GM13976 (cell line): ENCODE measurements at regions of chr20 and their contacts with region 1.

Region 1: GRCh38 chr20:21529863-21530262 is 16.0 kb upstream of the NKX2-2 start:
- DNase-seq: peak; percentile 36
- CTCF ChIP-seq: peak; percentile 39

Region 2: GRCh38 chr20:21571841-21572690 is 42.2 kb after region 1 on chr20:
- in situ Hi-C with region 1: loop called (anchors 5 kb)
- DNase-seq: peak; percentile 49
- CTCF ChIP-seq: peak; percentile 68